ENCODE measurements at regions of chr1 and their contacts with region 1.

Region 1: DNA sequence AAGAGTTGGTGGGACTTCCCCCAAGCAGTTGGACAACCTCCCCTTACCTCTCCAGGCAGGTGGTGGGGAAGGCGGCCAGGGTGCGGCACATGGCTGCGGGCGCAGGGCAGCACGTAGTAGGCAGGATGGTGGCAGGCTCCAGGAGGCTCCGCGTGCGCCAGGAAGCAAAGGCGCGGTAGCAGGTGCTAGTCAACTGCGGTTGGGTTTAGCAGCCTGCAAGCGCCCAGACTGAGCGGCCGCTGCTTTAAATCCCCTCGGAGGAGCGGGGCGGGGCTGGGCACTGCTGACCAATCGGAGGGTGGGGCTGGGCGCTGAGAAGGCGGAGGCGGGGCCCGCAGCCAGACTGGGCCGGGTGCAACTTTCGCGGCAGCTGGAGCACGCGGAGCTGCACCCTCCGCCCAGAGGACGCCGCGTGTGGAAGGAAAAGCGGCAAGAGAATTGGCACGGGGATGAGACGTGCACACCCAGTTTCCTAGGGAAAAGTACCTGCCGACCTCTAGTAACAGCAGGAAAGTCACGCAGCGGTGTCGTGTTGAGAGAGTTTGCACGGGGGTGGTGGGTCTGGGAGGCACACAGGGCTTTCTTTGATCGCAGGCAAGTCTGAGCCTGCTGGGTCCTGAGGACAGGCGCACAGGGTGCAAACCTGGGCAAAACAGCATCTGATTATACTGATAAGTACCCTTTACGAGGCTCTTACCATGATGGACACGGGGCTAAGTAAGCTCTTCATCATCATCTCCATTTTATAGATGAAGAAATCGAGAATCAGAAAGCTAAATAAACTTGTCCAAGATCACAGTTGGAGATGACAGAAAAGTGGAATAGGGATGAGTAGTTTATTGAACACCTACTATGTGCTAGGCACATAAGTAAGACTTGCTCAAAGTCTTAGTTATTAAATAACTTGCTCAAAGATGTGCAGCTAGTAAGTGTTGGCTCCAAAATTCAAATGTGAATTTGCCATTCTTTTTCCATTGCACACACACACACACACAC is at the start of gene RGS16:
- DNase-seq: peak; percentile 91
- H3K4me3 Mint-ChIP-seq: peak within 1 kb of the TSS; percentile 25
- H3K27ac Mint-ChIP-seq: no peak within 1 kb of the TSS
- H3K4me1 Mint-ChIP-seq: peaks cover 50% of the 10 kb centered on the region
- H3K27me3 Mint-ChIP-seq: peaks cover 2% of the 10 kb centered on the region
- total RNA-seq, gene RGS16: 138 and 143 TPM in 2 replicates

Region 2: GRCh38 chr1:182588500-182589452 is 15.7 kb before region 1 on chr1 and contains the start of gene RNASEL:
- intact Hi-C with region 1: loop called (anchors 1 kb)
- DNase-seq: peak; percentile 43
- H3K4me3 Mint-ChIP-seq: peak within 1 kb of the TSS; percentile 98
- H3K27ac Mint-ChIP-seq: peak within 1 kb of the TSS; percentile 98
- H3K4me1 Mint-ChIP-seq: peaks cover 44% of the 10 kb centered on the region
- H3K27me3 Mint-ChIP-seq: no peaks in the 10 kb centered on the region
- total RNA-seq, gene RNASEL: 4.6 and 5.0 TPM in 2 replicates

Region 3: GRCh38 chr1:182629499-182630096 is 25.1 kb after region 1 on chr1:
- intact Hi-C with region 1: loop called (anchors 1 kb)
- DNase-seq: peak; percentile 30
- H3K4me3 Mint-ChIP-seq: peak overlapping the region; percentile 46
- H3K27ac Mint-ChIP-seq: peak overlapping the region; percentile 85
- H3K4me1 Mint-ChIP-seq: peaks cover 88% of the 10 kb centered on the region
- H3K27me3 Mint-ChIP-seq: peaks cover 9% of the 10 kb centered on the region

Region 4: DNA sequence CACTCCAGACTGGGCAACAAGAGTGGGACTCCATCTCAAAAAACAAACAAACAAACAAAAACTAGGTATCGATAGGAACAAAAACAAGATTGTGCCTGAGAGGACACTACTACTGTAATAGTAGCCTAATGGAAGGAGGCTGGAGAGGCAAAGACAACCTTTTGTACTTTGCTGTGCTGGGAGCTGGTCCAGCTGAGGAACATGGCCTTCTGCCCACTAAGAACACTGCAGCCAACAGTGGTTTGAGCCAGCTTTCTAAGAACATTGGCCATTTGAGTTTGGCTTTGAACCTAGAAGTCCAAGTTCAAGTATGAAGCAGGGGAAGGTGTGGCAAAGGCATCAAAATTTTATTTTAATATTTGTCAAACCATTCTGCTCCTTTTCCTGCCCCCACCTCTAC is 102.7 kb after region 1 on chr1:
- intact Hi-C with region 1: loop called (anchors 1 kb)
- DNase-seq: no peak
- H3K4me3 Mint-ChIP-seq: no peak overlapping the region
- H3K27ac Mint-ChIP-seq: no peak overlapping the region
- H3K4me1 Mint-ChIP-seq: peaks cover 28% of the 10 kb centered on the region
- H3K27me3 Mint-ChIP-seq: peaks cover 2% of the 10 kb centered on the region

Region 5: GRCh38 chr1:182781841-182782586 is 177.5 kb after region 1 on chr1:
- intact Hi-C with region 1: loop called (anchors 1 kb)
- DNase-seq: peak; percentile 52
- H3K4me3 Mint-ChIP-seq: no peak overlapping the region
- H3K27ac Mint-ChIP-seq: no peak overlapping the region
- H3K4me1 Mint-ChIP-seq: peaks cover 30% of the 10 kb centered on the region
- H3K27me3 Mint-ChIP-seq: peaks cover 4% of the 10 kb centered on the region

Region 6: DNA sequence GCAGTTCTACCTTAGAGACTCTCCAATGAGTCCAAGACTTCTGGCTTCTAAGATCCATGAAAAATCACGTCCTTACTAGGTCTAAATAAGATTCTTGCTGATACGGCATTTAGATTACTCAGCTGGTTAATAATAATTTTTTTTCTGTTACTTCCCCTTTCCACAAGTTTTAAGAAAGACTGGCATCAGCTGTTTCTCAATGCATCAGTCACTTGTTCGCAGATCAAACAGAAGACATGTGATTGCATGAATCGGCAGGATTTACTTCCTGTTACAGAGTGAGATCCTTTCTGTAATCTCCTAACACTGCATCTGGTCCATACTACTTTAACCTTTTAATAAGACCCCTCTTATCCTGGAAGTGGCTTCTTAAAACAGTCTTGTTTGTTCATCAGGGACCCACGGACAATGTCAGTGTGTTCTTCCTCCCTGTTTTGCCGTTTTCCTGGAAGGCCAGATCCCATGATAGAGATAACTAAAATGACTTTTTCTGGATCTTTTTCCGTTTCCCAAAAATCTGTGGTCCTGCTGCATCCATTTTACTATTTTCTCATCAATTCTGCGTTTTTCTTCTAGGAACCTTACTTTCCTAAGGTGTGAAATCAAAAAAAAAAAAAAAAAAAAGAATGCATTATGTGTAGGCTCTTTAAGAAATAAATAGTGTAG is 191.2 kb after region 1 on chr1:
- intact Hi-C with region 1: no loop called
- DNase-seq: no peak
- H3K4me3 Mint-ChIP-seq: no peak overlapping the region
- H3K27ac Mint-ChIP-seq: no peak overlapping the region
- H3K4me1 Mint-ChIP-seq: peaks cover 11% of the 10 kb centered on the region
- H3K27me3 Mint-ChIP-seq: peaks cover 3% of the 10 kb centered on the region

Measured in activated T-helper 1 cell treated with anti-CD3 and anti-CD28 coated beads, Interleukin-12 subunit alpha, Interleukin-12 subunit beta, Interleukin-2, Interleukin-4 antibody, amounts not matched to agents 30 ng/mL and 10 ng/mL and 1 ng/mL, durations not matched to agents 14 hours and 24 hours and 36 hours (primary cell).